IMR-90 (cell line): ENCODE measurements at regions of chr19 and their contacts with region 1.

Region 1: DNA sequence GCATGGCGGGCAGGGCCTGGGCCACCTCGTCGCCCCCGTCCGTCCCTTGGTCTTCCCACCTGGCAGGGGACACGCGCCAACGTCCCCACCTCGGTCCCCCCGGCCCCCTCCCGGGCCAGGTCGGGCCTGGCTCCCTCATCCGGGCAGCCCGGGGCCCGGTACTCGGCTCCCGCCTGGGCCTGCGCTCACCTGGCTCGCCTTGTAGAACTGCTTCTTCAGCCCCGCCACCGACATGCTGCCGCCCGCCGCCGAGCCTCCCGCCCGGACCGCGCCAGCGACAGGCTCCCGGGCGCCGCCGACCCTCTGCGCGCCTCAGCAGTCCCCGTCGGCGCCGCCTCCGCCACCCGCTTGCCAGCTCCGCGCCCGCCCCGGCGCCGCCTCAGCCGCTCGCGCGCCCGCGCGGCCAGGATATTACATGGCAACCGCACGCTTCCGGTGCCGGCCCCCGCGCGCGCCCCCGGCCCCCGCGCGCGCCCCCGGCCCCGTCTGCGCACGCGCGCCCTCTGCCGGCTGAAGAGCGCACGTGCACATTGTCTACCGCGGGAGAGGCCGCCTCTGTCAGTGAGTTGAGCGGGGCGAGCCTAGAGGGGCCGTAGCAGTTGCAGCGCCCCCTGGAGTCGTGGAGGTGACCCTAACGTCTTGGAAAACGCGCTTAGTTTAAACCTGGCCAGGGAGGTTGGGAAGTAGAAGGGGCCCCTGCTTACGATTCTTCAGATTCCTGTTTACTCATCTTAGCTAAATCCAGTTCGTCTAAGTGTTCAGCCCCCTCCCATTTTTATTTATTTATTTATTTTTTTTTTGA is at the start of gene SH3GL1:
- DNase-seq: peak; percentile 88
- ATAC-seq: peak; percentile 78
- H3K4me3 ChIP-seq: peak within 1 kb of the TSS; percentile 94
- H3K27ac ChIP-seq: peak within 1 kb of the TSS; percentile 90
- H3K4me1 ChIP-seq: peaks cover 10% of the 10 kb centered on the region
- H3K27me3 ChIP-seq: no peaks in the 10 kb centered on the region
- CTCF ChIP-seq: peak; percentile 99
- POLR2A ChIP-seq: peak; percentile 79
- RAD21 ChIP-seq: peak; percentile 50
- total RNA-seq, gene SH3GL1: 28.1 and 32.2 TPM in 2 replicates

Region 2: DNA sequence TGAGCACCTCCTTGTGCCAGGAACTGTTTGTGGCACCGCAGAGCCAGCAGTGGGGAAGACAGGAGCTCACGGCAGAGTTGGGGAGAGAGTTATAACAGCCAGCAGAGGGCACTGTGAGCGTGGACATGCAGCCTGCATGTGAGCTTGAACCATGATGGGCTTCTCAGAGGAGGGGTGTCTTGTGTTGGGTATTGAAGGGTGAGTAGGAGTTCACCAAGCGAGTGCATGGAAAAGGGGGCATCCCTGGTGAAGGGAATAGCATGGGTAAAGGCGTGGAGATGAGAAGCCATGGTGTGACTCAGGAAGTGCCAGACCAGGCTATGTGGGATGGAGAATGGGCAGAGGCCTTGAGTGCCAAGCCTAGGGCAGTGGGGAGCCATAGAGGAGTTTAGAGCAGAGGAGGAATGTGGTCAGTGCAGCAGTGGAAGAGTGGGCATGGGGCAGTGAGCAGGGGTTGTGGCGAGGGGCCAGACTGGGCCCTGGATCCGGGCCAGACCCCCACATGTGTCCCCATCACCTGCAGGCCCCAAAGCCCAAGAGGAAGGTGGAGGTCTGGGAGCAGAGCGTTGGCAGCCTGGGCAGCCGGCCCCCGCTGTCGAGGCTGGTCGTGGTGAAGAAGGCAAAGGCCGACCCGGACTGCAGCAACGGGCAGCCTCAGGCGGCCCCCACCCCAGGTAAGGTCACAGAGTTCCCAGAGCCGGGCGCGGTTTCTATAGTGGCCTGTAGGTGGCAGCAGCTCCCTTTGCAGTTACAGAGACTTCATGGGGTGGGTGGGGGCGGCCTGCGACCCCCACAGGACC is 133.0 kb before region 1 on chr19:
- CTCF ChIA-PET with region 1: interaction called, 4 read pairs
- POLR2A ChIA-PET with region 1: no interaction called
- dilution Hi-C with region 1: no loop called
- in situ Hi-C with region 1: no loop called
- intact Hi-C with region 1: loop called (anchors 1 kb)
- DNase-seq: peak; percentile 37
- ATAC-seq: peak; percentile 83
- H3K4me3 ChIP-seq: no peak overlapping the region
- H3K27ac ChIP-seq: no peak overlapping the region
- H3K4me1 ChIP-seq: no peaks in the 10 kb centered on the region
- H3K27me3 ChIP-seq: no peaks in the 10 kb centered on the region
- CTCF ChIP-seq: peak; percentile 61
- POLR2A ChIP-seq: no peak
- RAD21 ChIP-seq: peak; percentile 65

Region 3: GRCh38 chr19:4328243-4328990 is 71.9 kb before region 1 on chr19:
- CTCF ChIA-PET with region 1: no interaction called
- POLR2A ChIA-PET with region 1: no interaction called
- dilution Hi-C with region 1: no loop called
- in situ Hi-C with region 1: no loop called
- intact Hi-C with region 1: no loop called
- DNase-seq: peak; percentile 74
- ATAC-seq: peak; percentile 90
- H3K4me3 ChIP-seq: peak overlapping the region; percentile 38
- H3K27ac ChIP-seq: no peak overlapping the region
- H3K4me1 ChIP-seq: no peaks in the 10 kb centered on the region
- H3K27me3 ChIP-seq: no peaks in the 10 kb centered on the region; the same call in 1 of the 2 replicates
- CTCF ChIP-seq: 0 out of 2 replicates have a peak, but pooled peaks have one; percentile 31
- POLR2A ChIP-seq: no peak
- RAD21 ChIP-seq: no peak

Region 4: GRCh38 chr19:4415352-4415751 is 15.0 kb after region 1 on chr19:
- CTCF ChIA-PET with region 1: interaction called, 10 read pairs
- POLR2A ChIA-PET with region 1: no interaction called
- dilution Hi-C with region 1: no loop called
- in situ Hi-C with region 1: no loop called
- intact Hi-C with region 1: no loop called
- DNase-seq: no peak
- ATAC-seq: peak; percentile 69
- H3K4me3 ChIP-seq: no peak overlapping the region
- H3K27ac ChIP-seq: peak overlapping the region; percentile 35; the same call in 1 of the 2 replicates
- H3K4me1 ChIP-seq: peaks cover 7% of the 10 kb centered on the region
- H3K27me3 ChIP-seq: no peaks in the 10 kb centered on the region
- CTCF ChIP-seq: no peak
- POLR2A ChIP-seq: no peak
- RAD21 ChIP-seq: no peak

Region 5: DNA sequence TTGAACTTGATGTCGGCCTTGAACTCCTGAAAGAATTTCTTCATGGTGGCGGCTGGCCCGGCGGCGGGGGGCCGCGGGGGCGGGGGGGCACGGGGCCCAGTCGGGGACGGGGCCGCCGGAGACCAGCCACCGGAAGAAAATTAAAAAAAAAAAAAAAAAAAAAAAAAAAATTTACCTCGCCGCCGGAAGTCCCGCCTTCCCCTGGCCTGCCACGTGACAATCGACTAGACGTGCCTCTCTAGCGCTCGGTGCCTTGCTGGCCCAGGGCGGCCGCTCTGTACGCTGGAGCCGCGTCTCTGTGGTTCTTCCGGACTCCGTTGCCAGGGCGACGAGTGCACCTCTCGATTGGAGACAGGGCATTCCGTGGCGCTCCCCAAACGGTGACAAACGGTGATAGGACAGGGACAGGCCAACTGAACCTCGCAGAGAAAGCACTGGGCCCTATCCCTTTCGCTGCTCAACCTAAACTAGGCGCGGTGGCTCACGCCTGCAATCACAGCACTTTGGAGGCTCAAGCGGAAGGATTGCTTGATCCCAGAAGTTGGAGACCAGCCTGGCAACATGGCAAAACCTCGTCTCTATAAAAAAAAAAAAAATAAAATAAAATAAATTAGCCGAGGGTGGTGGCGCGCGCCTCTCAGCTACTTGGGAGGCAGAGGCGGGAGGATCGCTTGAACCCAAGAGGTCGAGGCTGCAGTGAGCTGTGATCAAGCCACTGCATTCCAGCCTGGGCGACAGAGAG is 57.5 kb after region 1 on chr19 and contains the start of gene UBXN6:
- CTCF ChIA-PET with region 1: interaction called, 5 read pairs
- POLR2A ChIA-PET with region 1: no interaction called
- dilution Hi-C with region 1: no loop called
- in situ Hi-C with region 1: no loop called
- intact Hi-C with region 1: loop called (anchors 2 kb)
- DNase-seq: peak; percentile 99
- ATAC-seq: peak; percentile 71
- H3K4me3 ChIP-seq: peak within 1 kb of the TSS; percentile 97
- H3K27ac ChIP-seq: peak within 1 kb of the TSS; percentile 99
- H3K4me1 ChIP-seq: peaks cover 12% of the 10 kb centered on the region
- H3K27me3 ChIP-seq: no peaks in the 10 kb centered on the region
- CTCF ChIP-seq: no peak
- POLR2A ChIP-seq: peak; percentile 2
- RAD21 ChIP-seq: no peak
- total RNA-seq, gene UBXN6: 74.2 and 84.2 TPM in 2 replicates

Region 6: GRCh38 chr19:4482721-4483364 is 82.5 kb after region 1 on chr19:
- CTCF ChIA-PET with region 1: no interaction called
- POLR2A ChIA-PET with region 1: no interaction called
- dilution Hi-C with region 1: no loop called
- in situ Hi-C with region 1: no loop called
- intact Hi-C with region 1: no loop called
- DNase-seq: no peak
- ATAC-seq: no peak
- H3K4me3 ChIP-seq: no peak overlapping the region
- H3K27ac ChIP-seq: no peak overlapping the region
- H3K4me1 ChIP-seq: no peaks in the 10 kb centered on the region
- H3K27me3 ChIP-seq: no peaks in the 10 kb centered on the region
- CTCF ChIP-seq: no peak
- POLR2A ChIP-seq: no peak
- RAD21 ChIP-seq: no peak